WTC11 (cell line): ENCODE measurements at regions of chr1 and their contacts with region 1.

Region 1: GRCh38 chr1:208015255-208015654 is 104.3 kb upstream of the CD34 start:
- DNase-seq: no peak
- ATAC-seq: no peak
- H3K4me3 Mint-ChIP-seq: no peak overlapping the region
- H3K27ac Mint-ChIP-seq: no peak overlapping the region
- H3K4me1 Mint-ChIP-seq: no peaks in the 10 kb centered on the region
- H3K27me3 Mint-ChIP-seq: peaks cover 4% of the 10 kb centered on the region
- CTCF ChIP-seq: no peak

Region 2: DNA sequence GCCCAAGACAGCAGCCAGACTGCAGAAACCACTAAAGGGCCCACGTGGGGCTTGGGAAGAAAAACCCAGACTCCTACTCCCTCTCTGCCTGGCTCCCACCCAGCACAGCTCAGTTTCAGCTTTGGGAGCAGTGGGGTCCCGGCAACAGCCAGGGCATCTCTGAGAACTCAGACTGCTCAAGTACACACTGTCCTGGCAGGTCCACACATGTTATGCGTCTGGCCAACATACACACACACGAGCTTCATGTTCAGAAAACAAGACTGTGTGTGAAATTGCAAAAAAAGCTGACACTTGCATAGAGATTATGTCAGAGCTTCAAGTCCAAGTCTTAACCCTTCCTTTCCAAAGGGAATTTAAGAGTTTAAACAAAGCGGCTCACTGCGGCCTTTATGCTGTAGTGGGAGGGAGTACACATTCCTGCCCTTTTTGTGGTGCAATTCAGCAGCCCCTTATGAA is 32.2 kb after region 1 on chr1:
- CTCF ChIA-PET with region 1: no interaction called
- POLR2A ChIA-PET with region 1: no interaction called
- DNase-seq: no peak
- ATAC-seq: no peak
- H3K4me3 Mint-ChIP-seq: no peak overlapping the region
- H3K27ac Mint-ChIP-seq: no peak overlapping the region
- H3K4me1 Mint-ChIP-seq: peaks cover 11% of the 10 kb centered on the region
- H3K27me3 Mint-ChIP-seq: no peaks in the 10 kb centered on the region; the same call in 1 of the 2 replicates
- CTCF ChIP-seq: no peak

Region 3: GRCh38 chr1:208289716-208290115 is 274.5 kb after region 1 on chr1:
- CTCF ChIA-PET with region 1: no interaction called
- POLR2A ChIA-PET with region 1: interaction called, 10 read pairs
- DNase-seq: no peak
- ATAC-seq: no peak
- H3K4me3 Mint-ChIP-seq: no peak overlapping the region
- H3K27ac Mint-ChIP-seq: no peak overlapping the region
- H3K4me1 Mint-ChIP-seq: peaks cover 16% of the 10 kb centered on the region
- H3K27me3 Mint-ChIP-seq: peaks cover 5% of the 10 kb centered on the region; the same call in 1 of the 2 replicates
- CTCF ChIP-seq: no peak